GM10248 (cell line): ENCODE measurements at regions of chr12 and their contacts with region 1.

Region 1: GRCh38 chr12:8609061-8609570 is 3.5 kb downstream of the AICDA start:
- DNase-seq: no peak
- CTCF ChIP-seq: peak; percentile 84

Region 2: DNA sequence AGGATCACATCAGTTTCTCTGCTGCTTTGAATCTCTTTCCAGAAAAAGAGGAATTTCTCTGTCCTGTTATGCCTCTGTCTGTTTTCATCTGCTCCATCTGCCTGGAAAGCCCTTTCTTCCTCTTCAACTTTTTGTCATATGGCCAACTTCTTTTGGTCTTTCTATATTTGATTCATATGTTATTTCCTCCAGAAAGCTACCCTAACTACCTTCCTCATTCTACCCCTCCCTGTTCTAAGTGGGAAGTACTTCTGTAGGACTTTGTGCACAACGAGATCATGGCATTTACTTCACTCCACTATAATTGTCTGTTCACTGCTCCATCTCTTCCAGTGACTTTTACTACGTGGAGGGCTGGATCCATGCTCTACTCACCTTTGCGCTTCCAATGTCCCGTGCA is 89.9 kb before region 1 on chr12:
- CTCF ChIA-PET with region 1: no interaction called
- POLR2A ChIA-PET with region 1: no interaction called
- DNase-seq: no peak
- CTCF ChIP-seq: no peak

Region 3: DNA sequence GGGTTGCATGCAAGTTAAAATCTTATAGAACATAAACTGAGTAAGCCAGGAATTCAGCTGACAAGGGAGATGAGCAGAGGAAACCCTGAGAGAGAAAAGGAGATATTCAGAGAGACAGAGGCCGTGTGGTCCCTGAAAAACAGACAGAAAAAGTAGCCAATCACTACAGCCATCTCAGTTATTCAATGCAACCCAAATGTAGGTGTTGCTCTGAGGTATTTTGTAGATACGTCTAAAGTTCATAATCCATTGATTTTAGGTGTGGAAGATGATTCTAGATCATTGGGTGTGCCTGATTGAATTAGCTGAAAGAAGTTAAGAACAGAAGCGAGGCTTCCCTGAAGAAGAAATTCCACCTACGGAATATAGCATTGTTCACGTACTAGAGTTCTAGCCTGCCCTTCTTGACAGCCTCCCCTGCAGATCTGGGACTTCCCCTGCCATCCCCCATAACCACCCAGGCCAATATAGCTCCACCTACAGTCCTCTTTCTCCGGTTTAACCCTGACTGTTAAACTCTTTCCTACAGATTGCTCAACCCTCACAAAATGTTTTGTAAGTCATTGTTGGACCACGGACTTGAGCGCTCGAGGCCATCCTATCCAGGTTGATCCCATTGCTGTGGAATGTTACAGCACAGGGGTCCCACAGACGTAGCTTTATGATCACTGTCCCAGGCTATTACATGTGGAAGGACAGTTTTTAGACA is 18.1 kb before region 1 on chr12:
- CTCF ChIA-PET with region 1: interaction called, 106 read pairs
- POLR2A ChIA-PET with region 1: interaction called, 3 read pairs
- DNase-seq: peak; percentile 80
- CTCF ChIP-seq: peak; percentile 34

Region 4: GRCh38 chr12:8622646-8623045 is 13.5 kb after region 1 on chr12:
- CTCF ChIA-PET with region 1: interaction called, 26 read pairs
- POLR2A ChIA-PET with region 1: no interaction called
- DNase-seq: no peak
- CTCF ChIP-seq: no peak

Region 5: DNA sequence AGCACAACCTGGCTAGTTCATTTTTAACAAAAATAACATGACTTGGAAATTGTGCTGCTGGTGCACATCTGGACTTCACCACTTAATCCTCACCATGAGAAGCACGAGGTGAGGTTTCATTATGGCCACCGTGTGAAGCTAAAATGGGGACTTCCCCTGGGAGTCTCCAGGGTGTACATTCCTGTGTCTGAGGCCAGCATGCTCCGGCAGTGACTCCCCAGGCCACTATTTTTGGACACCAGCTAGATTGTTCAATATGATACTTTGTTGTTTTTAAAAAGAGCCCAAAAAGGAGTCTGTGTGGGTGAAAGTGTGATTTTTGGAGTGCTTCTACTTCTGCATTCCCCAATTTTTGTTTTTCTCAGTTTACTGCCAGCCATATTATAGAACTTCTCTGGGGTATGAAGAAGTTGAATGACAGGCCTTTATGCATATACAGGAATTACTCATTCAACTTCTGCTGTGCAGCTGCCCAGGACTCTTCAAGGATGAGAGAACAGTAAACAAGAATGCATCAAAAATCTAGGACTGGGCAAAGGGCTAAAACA is 20.4 kb after region 1 on chr12:
- CTCF ChIA-PET with region 1: interaction called, 26 read pairs
- POLR2A ChIA-PET with region 1: interaction called, 5 read pairs
- DNase-seq: peak; percentile 68
- CTCF ChIP-seq: no peak

Region 6: DNA sequence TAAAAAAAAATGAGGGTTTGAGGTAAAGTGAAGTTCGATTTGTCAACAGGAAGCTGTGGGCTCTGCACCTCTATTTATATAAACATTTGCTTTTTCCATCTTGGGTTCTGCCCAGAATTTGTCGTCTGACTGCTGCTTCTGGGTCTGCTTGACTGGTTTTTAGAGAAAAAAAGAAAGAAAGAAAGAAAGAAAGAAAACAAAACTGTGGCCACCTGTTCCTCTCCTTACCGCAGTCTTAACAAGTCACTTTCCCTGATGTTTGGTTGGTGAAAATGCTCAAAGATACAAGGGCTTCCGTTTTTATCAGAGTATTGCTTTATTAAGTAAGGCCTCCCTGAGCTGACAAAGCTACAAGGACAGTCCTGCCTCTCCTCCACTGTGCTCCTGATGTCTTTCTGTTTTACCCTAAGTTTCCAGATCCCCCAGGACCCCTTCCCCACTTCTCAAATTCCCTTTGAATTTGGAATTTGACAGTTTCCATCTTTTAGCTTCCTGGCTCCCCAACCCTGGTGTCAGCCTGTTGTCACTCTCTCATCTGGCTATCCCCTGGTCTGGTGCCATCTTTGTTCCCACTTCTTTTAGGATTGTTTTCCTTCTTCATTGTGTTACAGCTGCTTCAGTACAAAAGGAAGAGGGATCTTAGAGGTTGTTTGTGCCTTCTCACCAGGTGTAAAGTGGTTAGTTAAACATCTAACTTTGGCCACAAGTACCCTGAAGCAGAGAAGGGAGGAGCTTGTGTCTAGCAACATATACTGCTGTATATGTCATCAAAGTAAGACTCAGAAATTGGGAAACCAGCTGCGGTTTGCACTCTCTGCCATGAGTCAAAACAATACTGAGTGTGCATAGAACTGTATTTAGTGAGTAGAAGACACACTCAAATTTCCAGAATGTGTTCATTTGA is 35.5 kb after region 1 on chr12:
- CTCF ChIA-PET with region 1: interaction called, 35 read pairs
- POLR2A ChIA-PET with region 1: interaction called, 5 read pairs
- DNase-seq: peak; percentile 63
- CTCF ChIP-seq: no peak

Region 7: GRCh38 chr12:8662593-8662992 is 53.5 kb after region 1 on chr12 and contains the start of gene MFAP5:
- CTCF ChIA-PET with region 1: interaction called, 10 read pairs
- POLR2A ChIA-PET with region 1: interaction called, 3 read pairs
- DNase-seq: no peak
- CTCF ChIP-seq: no peak